H1 (cell line): ENCODE measurements at regions of chr2 and their contacts with region 1.

Region 1: DNA sequence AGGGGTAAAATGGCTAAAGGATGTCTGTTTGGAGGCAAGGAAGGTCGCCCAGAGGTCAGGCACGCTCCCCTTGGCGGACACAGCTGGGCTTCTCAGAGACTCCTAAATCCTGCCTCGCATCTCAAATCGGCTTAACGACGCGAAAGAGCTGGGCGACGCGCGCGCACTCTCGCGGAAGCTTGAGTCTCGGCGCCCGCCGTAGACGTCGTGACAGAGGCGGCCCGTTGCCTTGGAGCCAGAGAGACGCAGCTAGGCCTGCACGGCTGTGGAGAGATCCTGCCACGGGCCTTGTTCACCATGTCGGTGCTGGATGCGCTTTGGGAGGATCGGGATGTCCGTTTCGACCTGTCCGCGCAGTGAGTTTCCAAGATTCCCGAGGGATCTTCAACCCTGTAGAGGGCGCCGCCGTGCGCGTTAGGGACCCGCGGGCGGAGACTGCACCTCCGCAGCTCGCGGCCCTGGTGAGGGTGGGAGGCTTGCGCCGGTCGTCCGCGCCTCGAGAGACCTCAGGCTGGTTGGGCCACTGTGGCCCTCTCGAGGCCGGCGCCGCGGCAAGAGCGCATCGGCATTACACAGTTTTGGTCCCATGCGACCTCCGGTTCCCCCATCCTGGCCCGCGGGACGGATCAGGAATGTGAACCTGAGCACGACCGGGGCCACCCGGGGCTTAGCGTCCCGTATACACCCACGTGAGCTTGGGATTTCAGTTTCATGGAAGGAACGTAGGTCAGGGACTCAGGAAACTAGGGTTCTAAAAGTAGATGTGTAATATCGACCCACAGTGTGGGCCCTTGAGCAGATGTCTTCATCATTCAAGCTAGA is at the start of gene BBS5:
- DNase-seq: peak; percentile 15 to 79
- H3K4me3 ChIP-seq: peak within 1 kb of the TSS; percentile 52 to 79 (median 64)
- H3K27ac ChIP-seq: no peak within 1 kb of the TSS
- H3K4me1 ChIP-seq: no peaks in the 10 kb centered on the region; a peak in 2 of 7 replicates
- H3K27me3 ChIP-seq: peaks cover 16 to 29% (median 27%) of the 10 kb centered on the region in 4 experiments
- CTCF ChIP-seq: peak; percentile 31 to 55 (median 44)
- EP300 ChIP-seq: no peak
- POLR2A ChIP-seq: no peak
- RAD21 ChIP-seq: peak; percentile 29 to 42; a peak in 3 of 4 replicates
- total RNA-seq, gene BBS5: 0.20 and 0.31 TPM in 2 replicates

Region 2: GRCh38 chr2:169468841-169469240 is 10.6 kb before region 1 on chr2:
- CTCF ChIA-PET with region 1: interaction called, 12 read pairs
- POLR2A ChIA-PET with region 1: no interaction called
- DNase-seq: no peak
- H3K4me3 ChIP-seq: no peak overlapping the region
- H3K27ac ChIP-seq: no peak overlapping the region
- H3K4me1 ChIP-seq: no peaks in the 10 kb centered on the region
- H3K27me3 ChIP-seq: no peaks in the 10 kb centered on the region
- CTCF ChIP-seq: no peak
- EP300 ChIP-seq: no peak
- POLR2A ChIP-seq: no peak
- RAD21 ChIP-seq: no peak